ENCODE measurements at regions of chr6 and their contacts with region 1.

Region 1: GRCh38 chr6:111873178-111874024 is at the start of gene FYN:
- DNase-seq: peak; percentile 98 to 99
- ATAC-seq: peak; percentile 99 to 100 (median 99)
- H3K4me3 ChIP-seq: peak within 1 kb of the TSS; percentile 78 to 91 (median 86)
- H3K27ac ChIP-seq: peak within 1 kb of the TSS; percentile 76 to 92 (median 88)
- H3K4me1 ChIP-seq: peaks cover 0 to 45% (median 28%) of the 10 kb centered on the region in 9 donors
- H3K27me3 ChIP-seq: no peaks in the 10 kb centered on the region
- CTCF ChIP-seq: peak; percentile 26 to 58 (median 44)
- total RNA-seq, gene FYN: 33.5 to 58.1 (median 45.6) TPM

Region 2: DNA sequence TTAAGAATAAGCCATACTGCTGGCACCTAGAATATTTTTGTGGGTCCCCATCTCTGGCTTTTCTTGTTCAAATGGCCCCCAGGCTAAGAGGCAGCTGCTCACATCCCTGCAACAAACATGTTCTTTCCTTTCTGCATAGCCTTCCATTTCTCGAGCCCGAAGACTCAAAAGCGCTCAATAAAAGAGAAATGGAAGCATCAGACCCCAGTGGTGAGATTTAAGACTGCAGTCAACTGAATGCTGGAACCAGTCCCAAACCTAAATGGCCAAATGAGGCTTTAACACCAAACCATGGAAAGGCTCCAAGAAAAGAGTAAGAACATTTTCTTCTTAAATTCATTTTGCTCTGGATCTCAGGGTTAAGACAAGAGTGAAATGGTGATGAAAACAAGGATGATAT is 145.6 kb before region 1 on chr6:
- intact Hi-C with region 1: loop called in 4 of 10 experiments (anchors 5 to 10 kb)
- DNase-seq: no peak
- ATAC-seq: no peak
- H3K4me3 ChIP-seq: no peak overlapping the region
- H3K27ac ChIP-seq: no peak overlapping the region
- H3K4me1 ChIP-seq: peaks cover 0 to 65% (median 53%) of the 10 kb centered on the region in 9 donors
- H3K27me3 ChIP-seq: no peaks in the 10 kb centered on the region
- CTCF ChIP-seq: peak in 8 of 9 donors; percentile 15 to 48 (median 39)

Region 3: GRCh38 chr6:111743862-111744692 is 129.3 kb before region 1 on chr6:
- intact Hi-C with region 1: loop called in 2 of 10 experiments (anchors 10 kb)
- DNase-seq: peak in 1 of 2 donors; percentile 88
- ATAC-seq: peak; percentile 85 to 91 (median 89)
- H3K4me3 ChIP-seq: peak overlapping the region in 1 of 10 donors; percentile 0
- H3K27ac ChIP-seq: peak overlapping the region; percentile 37 to 79 (median 72)
- H3K4me1 ChIP-seq: peaks cover 9 to 98% (median 85%) of the 10 kb centered on the region in 9 donors
- H3K27me3 ChIP-seq: no peaks in the 10 kb centered on the region
- CTCF ChIP-seq: no peak

Region 4: GRCh38 chr6:111804627-111805235 is 68.7 kb before region 1 on chr6:
- intact Hi-C with region 1: loop called in 1 of 10 experiments (anchors 5 kb)
- DNase-seq: no peak
- ATAC-seq: peak; percentile 36 to 74 (median 62)
- H3K4me3 ChIP-seq: no peak overlapping the region
- H3K27ac ChIP-seq: peak overlapping the region in 8 of 10 donors; percentile 20 to 80 (median 57)
- H3K4me1 ChIP-seq: peaks cover 6 to 72% (median 48%) of the 10 kb centered on the region in 9 donors
- H3K27me3 ChIP-seq: no peaks in the 10 kb centered on the region
- CTCF ChIP-seq: peak in 3 of 9 donors; percentile 15 to 36 (median 33)

Region 5: GRCh38 chr6:111997078-111997852 is 123.9 kb after region 1 on chr6:
- intact Hi-C with region 1: loop called in 8 of 10 experiments (anchors 2 to 10 kb)
- DNase-seq: peak; percentile 77 to 81
- ATAC-seq: peak; percentile 86 to 94 (median 92)
- H3K4me3 ChIP-seq: peak overlapping the region in 7 of 10 donors; percentile 6 to 33 (median 23)
- H3K27ac ChIP-seq: peak overlapping the region in 9 of 10 donors; percentile 15 to 65 (median 48)
- H3K4me1 ChIP-seq: peaks cover 0 to 23% (median 6%) of the 10 kb centered on the region in 9 donors
- H3K27me3 ChIP-seq: peaks cover 0 to 4% (median 0%) of the 10 kb centered on the region in 7 donors
- CTCF ChIP-seq: peak; percentile 88 to 97 (median 92)